Ascending aorta (tissue), 2 donors: ENCODE measurements at regions of chr6 and their contacts with region 1.

Region 1: DNA sequence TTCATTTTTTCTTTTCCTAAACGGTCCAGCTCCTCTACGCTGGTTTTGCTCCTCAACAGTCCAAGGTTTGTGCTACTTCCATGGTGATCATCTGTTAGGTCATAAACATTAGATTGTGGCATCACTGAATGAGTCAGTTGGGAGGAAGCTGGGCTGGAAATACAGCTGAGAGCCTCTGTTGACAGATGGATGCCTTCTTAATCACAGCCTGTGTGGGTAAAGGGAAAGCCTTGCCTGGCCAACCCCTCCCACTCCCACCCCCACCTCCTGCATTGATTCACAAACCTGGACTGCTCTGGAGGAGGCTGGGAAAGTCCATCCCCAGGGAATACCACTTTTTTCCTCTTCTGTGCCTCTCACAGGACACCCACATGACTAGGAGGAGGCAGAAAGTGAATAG is 180.6 kb upstream of the CCN2 start:
- DNase-seq: peak; percentile 33 to 93
- H3K4me3 ChIP-seq: peak overlapping the region; percentile 19 to 38
- H3K27ac ChIP-seq: peak overlapping the region; percentile 90 to 92
- H3K4me1 ChIP-seq: peaks cover 23 to 32% of the 10 kb centered on the region in 2 donors
- H3K27me3 ChIP-seq: no peaks in the 10 kb centered on the region
- CTCF ChIP-seq: no peak

Region 2: DNA sequence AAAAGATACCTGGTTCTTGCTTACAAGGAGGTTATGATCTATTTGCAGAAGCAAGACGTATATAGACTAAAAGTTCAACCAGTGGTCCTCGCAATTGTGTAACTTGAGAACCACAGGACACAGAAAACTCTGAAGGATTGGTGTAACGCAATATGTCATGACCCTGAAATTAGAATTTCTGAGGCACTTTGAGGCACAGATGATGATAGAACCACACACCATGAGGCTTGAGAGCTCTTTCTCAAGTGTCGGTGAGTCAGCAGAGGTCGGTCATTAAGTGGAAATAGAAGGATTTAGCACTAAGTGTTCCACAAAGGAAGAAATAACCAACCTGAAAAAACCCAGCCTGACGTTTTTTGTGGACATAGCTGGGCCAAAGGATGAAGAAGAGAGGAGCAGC is 165.3 kb before region 1 on chr6:
- intact Hi-C with region 1: no loop called
- DNase-seq: no peak
- H3K4me3 ChIP-seq: no peak overlapping the region
- H3K27ac ChIP-seq: no peak overlapping the region
- H3K4me1 ChIP-seq: no peaks in the 10 kb centered on the region
- H3K27me3 ChIP-seq: no peaks in the 10 kb centered on the region
- CTCF ChIP-seq: no peak

Region 3: DNA sequence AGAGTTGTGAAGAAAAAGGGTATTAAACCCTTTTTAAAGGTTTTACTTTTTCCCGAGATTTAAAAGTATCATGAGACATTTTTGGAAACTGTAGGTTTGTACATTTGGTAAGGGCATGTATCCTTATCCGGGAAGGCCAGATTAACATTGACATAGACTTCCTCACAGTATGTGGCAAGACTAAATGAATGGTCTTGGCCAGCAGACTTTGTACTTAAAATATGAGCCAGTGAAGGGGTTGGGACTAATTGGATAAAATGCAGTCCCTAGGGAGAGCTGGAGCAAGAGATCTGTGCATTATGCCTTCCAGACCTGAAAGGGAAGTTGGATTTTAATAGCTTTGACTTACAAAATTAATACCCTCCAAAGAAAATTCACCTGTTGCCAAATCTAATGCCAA is 120.2 kb before region 1 on chr6:
- intact Hi-C with region 1: loop called (anchors 2 kb)
- DNase-seq: no peak
- H3K4me3 ChIP-seq: peak overlapping the region in 1 of 2 donors; percentile 13
- H3K27ac ChIP-seq: peak overlapping the region; percentile 73 to 81
- H3K4me1 ChIP-seq: peaks cover 0 to 13% of the 10 kb centered on the region in 2 donors
- H3K27me3 ChIP-seq: no peaks in the 10 kb centered on the region
- CTCF ChIP-seq: no peak

Region 4: GRCh38 chr6:132084833-132085509 is 46.8 kb before region 1 on chr6:
- intact Hi-C with region 1: loop called (anchors 1 kb)
- DNase-seq: no peak
- H3K4me3 ChIP-seq: peak overlapping the region in 1 of 2 donors; percentile 29
- H3K27ac ChIP-seq: peak overlapping the region; percentile 93 to 95
- H3K4me1 ChIP-seq: peaks cover 6 to 23% of the 10 kb centered on the region in 2 donors
- H3K27me3 ChIP-seq: no peaks in the 10 kb centered on the region
- CTCF ChIP-seq: no peak

Region 5: DNA sequence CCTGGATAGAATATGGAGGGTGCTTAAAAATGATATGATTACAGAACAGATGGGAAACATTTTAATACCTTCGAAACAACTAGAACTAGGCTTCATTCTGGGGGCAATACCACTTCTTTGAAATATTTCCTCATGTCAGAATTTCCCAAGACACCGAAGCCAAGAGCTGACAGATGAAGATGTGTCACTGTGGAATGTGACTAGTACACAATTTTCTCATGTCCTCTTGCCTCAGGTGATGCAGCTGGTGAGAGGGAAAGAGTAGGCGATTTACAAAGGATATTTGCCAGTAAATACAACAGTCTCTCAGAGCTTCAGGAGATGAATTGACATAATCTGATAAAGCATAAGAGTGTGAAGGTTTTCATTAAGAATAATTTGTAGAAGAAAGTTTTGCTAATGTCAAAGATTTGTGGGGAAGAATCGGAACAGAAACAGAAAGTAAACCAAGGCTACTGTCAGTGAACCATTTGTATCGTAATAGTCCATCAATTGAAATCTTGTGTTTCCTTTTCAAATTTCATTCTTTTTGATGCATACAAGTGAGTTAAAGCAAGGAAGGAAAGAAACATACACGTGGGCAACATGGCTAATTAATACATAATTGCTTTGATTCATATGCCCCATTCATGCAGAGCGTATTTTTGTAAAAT is 15.9 kb before region 1 on chr6:
- intact Hi-C with region 1: loop called (anchors 2 kb)
- DNase-seq: no peak
- H3K4me3 ChIP-seq: peak overlapping the region; percentile 20 to 57
- H3K27ac ChIP-seq: peak overlapping the region; percentile 64 to 74
- H3K4me1 ChIP-seq: peaks cover 0 to 18% of the 10 kb centered on the region in 2 donors
- H3K27me3 ChIP-seq: no peaks in the 10 kb centered on the region
- CTCF ChIP-seq: no peak

Region 6: DNA sequence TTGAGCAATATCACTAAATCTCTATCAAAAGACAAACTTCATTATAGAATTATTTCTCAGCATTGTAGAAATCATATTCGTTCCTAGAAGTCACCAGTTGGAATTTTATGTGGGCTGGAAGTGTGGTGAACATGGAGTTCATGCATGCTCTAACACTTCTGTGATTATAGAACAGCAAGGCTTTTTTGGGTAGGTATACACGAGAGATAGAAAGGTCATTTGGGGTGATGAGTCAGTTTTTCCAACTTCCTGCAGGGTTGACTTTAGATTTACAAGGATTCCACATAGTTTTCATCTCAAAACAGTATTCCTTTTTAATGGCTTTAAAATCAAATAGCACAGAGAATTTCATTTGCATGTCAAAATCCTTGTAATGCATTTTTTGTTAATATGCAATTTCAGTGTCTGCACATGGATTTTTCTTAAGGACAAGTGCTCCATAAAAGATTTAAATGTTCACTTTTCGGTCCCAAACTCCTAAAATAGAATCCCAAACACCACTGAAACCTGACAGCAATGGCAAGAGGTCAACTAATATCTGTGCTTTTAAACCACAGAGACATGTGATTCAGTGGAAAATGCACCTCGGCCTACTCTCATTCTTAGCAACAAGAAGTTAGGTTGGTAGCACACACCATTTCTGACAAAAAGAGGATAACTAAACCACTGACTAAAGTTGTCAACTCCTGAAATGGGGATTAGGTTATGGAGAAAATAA is 58.5 kb after region 1 on chr6:
- intact Hi-C with region 1: loop called (anchors 2 kb)
- DNase-seq: no peak
- H3K4me3 ChIP-seq: no peak overlapping the region
- H3K27ac ChIP-seq: peak overlapping the region; percentile 64 to 79
- H3K4me1 ChIP-seq: peaks cover 0 to 24% of the 10 kb centered on the region in 2 donors
- H3K27me3 ChIP-seq: no peaks in the 10 kb centered on the region
- CTCF ChIP-seq: no peak

Region 7: GRCh38 chr6:132247381-132248159 is 115.8 kb after region 1 on chr6:
- intact Hi-C with region 1: no loop called
- DNase-seq: no peak
- H3K4me3 ChIP-seq: no peak overlapping the region
- H3K27ac ChIP-seq: no peak overlapping the region
- H3K4me1 ChIP-seq: no peaks in the 10 kb centered on the region
- H3K27me3 ChIP-seq: no peaks in the 10 kb centered on the region
- CTCF ChIP-seq: no peak

Region 8: GRCh38 chr6:132843316-132844043 is 711.7 kb after region 1 on chr6:
- intact Hi-C with region 1: no loop called
- DNase-seq: no peak
- H3K4me3 ChIP-seq: no peak overlapping the region
- H3K27ac ChIP-seq: no peak overlapping the region
- H3K4me1 ChIP-seq: no peaks in the 10 kb centered on the region
- H3K27me3 ChIP-seq: no peaks in the 10 kb centered on the region
- CTCF ChIP-seq: no peak